ENCODE measurements at regions of chr1 and their contacts with region 1.

Region 1: DNA sequence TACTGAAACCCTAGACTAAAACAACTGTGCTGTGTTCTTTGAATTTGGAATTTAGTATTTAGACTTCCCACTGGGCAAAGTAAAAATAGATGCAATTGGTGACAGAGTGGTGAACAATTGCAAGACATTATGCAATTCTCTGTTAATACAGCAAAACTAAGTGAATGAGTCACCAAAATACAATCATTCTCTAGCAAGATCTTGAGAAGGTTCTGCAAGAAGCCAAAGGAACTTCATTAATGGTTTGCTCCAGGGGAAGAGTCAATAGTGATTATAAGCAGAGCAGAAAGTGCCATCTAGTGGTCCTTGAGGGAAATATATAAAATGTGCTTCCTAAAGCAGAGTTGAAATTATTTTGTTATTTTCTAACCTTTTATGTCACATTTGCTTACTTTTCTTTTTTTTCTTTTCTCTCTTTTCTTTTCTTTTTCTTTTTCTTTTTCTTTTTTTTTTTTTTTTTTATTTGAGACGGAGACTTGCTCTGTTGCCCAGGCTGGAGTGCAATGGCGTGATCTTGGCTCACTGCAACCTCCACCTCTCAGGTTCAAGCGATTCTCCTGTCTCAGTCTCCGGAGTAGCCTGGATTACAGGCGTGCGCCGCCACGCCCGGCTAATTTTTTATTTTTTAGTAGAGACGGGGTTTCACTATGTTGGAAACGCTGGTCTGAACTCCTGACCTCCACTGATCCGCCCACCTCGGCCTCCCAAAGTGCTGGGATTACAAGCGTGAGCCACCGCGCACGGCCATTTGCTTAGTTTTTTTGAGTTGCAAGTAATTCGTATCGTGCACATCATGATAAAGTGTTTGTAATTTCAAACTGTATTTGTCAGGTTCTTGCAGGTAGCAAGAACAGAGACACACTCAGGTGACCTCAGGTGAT is 99.2 kb downstream of the CTH start:
- DNase-seq: peak in 2 of 9 experiments; percentile 56 to 68
- ATAC-seq: peak; percentile 69
- H3K4me3 ChIP-seq: no peak overlapping the region
- H3K4me3 Mint-ChIP-seq: no peak overlapping the region
- H3K27ac ChIP-seq: no peak overlapping the region
- H3K27ac Mint-ChIP-seq: no peak overlapping the region
- H3K4me1 ChIP-seq: no peaks in the 10 kb centered on the region
- H3K4me1 Mint-ChIP-seq: no peaks in the 10 kb centered on the region
- H3K27me3 ChIP-seq: no peaks in the 10 kb centered on the region
- H3K27me3 Mint-ChIP-seq: peaks cover 18% of the 10 kb centered on the region
- CTCF ChIP-seq: peak; percentile 83

Region 2: DNA sequence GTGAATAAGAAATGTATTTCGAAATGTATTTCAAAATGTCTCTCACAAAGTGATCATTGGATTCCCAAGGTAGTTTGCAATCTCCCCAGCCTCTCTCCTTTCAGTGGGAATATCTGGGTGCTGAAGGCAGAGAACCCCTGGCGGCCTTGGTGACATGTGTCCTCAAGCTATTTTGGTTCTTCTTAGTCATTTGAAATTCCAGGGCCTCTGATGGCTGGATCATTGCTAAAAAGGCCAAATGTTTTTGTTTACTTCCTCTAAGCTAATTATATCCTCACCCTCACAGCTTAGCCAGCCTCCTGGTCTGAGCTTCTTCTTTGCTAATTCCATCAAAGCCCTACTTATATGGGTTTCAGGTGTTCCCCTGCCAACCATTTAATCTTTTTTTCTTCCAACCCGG is 376.1 kb before region 1 on chr1:
- CTCF ChIA-PET with region 1: interaction called, 28 read pairs
- POLR2A ChIA-PET with region 1: no interaction called
- intact Hi-C with region 1: loop called (anchors 1 kb)
- DNase-seq: no peak
- ATAC-seq: no peak
- H3K4me3 ChIP-seq: no peak overlapping the region
- H3K4me3 Mint-ChIP-seq: no peak overlapping the region
- H3K27ac ChIP-seq: no peak overlapping the region
- H3K27ac Mint-ChIP-seq: no peak overlapping the region
- H3K4me1 ChIP-seq: no peaks in the 10 kb centered on the region
- H3K4me1 Mint-ChIP-seq: peaks cover 3% of the 10 kb centered on the region
- H3K27me3 ChIP-seq: no peaks in the 10 kb centered on the region
- H3K27me3 Mint-ChIP-seq: peaks cover 6% of the 10 kb centered on the region
- CTCF ChIP-seq: no peak

Region 3: DNA sequence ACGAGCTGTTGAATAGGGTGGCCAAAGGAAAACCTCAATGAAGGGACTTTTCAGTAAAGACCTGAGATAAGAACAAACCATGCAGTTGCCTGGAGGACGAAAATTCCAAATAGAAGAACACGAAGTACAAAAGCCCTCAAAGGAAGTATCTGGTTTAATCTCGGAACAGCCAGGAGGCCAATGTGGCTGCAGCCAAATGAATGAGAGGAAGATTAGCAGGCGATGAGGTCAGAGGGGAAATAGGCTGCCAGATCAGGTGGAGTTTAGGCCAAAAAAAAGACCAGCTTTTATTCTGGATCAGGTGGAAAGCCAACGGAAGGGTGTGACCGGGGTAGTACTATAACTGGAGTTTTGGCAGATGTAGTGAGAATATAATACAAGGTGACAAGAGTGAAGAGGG is 245.4 kb before region 1 on chr1:
- CTCF ChIA-PET with region 1: no interaction called
- POLR2A ChIA-PET with region 1: no interaction called
- intact Hi-C with region 1: loop called in 1 of 2 experiments (anchors 5 kb)
- DNase-seq: no peak
- ATAC-seq: no peak
- H3K4me3 ChIP-seq: no peak overlapping the region
- H3K4me3 Mint-ChIP-seq: no peak overlapping the region
- H3K27ac ChIP-seq: no peak overlapping the region
- H3K27ac Mint-ChIP-seq: peak overlapping the region; percentile 66
- H3K4me1 ChIP-seq: no peaks in the 10 kb centered on the region
- H3K4me1 Mint-ChIP-seq: no peaks in the 10 kb centered on the region
- H3K27me3 ChIP-seq: no peaks in the 10 kb centered on the region
- H3K27me3 Mint-ChIP-seq: no peaks in the 10 kb centered on the region
- CTCF ChIP-seq: no peak

Region 4: DNA sequence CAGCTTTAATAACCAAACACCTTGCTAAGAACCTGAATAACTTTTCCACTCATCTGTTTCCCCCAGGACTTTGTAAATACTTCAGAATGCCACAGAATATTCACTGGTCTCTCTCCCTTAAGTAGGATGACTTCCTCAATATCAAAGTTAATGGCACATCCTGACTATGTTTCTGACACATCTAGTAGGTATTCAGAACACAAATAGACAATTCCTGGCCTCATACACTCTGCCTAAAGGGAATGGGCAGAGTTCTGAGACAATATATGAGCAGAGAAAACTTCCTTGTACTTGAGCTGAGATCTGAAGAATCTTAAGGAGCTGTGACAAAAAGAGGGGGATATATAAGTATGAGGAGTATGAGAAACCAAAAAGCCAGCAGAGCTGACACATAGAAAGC is 190.5 kb before region 1 on chr1:
- CTCF ChIA-PET with region 1: no interaction called
- POLR2A ChIA-PET with region 1: no interaction called
- intact Hi-C with region 1: loop called in 1 of 2 experiments (anchors 5 kb)
- DNase-seq: no peak
- ATAC-seq: no peak
- H3K4me3 ChIP-seq: no peak overlapping the region
- H3K4me3 Mint-ChIP-seq: no peak overlapping the region
- H3K27ac ChIP-seq: no peak overlapping the region
- H3K27ac Mint-ChIP-seq: no peak overlapping the region
- H3K4me1 ChIP-seq: peaks cover 3% of the 10 kb centered on the region
- H3K4me1 Mint-ChIP-seq: peaks cover 28% of the 10 kb centered on the region
- H3K27me3 ChIP-seq: no peaks in the 10 kb centered on the region
- H3K27me3 Mint-ChIP-seq: no peaks in the 10 kb centered on the region
- CTCF ChIP-seq: no peak

Measured in CD8-positive, alpha-beta T cell (primary cell).